HEK293 (cell line): ENCODE measurements at regions of chr6 and their contacts with region 1.

Region 1: DNA sequence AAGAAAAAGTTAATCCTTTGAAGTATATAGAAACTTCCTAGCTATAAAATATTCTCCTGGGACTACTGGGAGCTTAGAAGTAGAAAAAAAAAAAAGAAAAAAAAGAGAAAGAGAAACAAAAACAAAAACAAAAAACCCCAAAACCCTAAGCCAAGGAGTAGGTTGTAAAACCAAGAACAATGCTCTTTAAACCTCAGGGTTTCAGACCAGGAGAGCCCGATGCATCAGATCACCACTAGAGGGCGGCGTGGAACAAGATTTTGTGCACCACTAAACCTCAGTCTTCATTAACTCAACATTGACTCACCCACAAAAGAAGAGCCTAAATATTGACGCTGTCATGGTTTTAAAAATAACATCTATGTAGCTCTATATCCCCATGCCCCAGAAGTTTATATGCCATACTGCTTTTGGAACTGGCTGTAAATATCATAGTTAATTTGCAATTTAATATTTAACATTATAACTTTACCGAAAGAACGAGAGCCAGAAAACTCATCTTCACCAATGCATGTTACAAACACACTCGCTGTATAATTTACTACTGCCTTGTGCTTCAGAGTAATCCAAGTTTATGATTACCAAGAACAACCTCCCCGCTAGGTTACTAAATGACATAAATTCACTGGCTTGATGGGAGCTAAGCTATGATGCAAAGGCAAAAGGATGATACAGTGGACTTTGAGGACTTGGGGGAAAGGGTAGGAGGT is 19.2 kb downstream of the MCUR1 start:
- H3K4me3 ChIP-seq: no peak overlapping the region
- H3K27ac ChIP-seq: no peak overlapping the region
- H3K4me1 ChIP-seq: peaks cover 4% of the 10 kb centered on the region; the same call in 1 of the 2 replicates
- CTCF ChIP-seq: peak; percentile 64; the same call in 1 of the 2 replicates

Region 2: GRCh38 chr6:11947063-11947974 is 1847.9 kb before region 1 on chr6:
- CTCF ChIA-PET with region 1: no interaction called
- POLR2A ChIA-PET with region 1: no interaction called
- H3K4me3 ChIP-seq: no peak overlapping the region
- H3K27ac ChIP-seq: no peak overlapping the region
- H3K4me1 ChIP-seq: no peaks in the 10 kb centered on the region
- CTCF ChIP-seq: no peak

Region 3: GRCh38 chr6:13653296-13653695 is 141.9 kb before region 1 on chr6:
- CTCF ChIA-PET with region 1: no interaction called
- POLR2A ChIA-PET with region 1: no interaction called
- H3K4me3 ChIP-seq: no peak overlapping the region
- H3K27ac ChIP-seq: no peak overlapping the region
- H3K4me1 ChIP-seq: peaks cover 12% of the 10 kb centered on the region; the same call in 1 of the 2 replicates
- CTCF ChIP-seq: no peak

Region 4: DNA sequence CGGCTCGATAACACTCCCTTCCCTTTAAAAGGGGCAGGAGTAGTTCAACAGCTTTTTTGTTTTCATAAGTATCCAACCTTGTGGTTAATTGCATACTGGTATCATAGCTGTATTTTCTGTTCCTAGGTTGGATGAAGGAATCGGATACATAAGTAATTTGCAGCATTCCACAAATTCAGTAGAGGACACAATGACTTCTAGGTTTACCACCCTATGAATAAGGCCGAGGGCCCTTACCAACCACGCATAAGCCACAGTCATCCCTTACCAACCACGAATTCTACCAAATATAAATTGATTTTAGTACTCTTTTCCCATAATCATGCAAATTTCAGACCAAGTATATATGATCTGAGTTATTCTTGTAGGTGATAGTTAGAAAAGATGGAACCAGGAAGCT is 17.2 kb before region 1 on chr6:
- CTCF ChIA-PET with region 1: interaction called, 10 read pairs
- POLR2A ChIA-PET with region 1: no interaction called
- H3K4me3 ChIP-seq: no peak overlapping the region
- H3K27ac ChIP-seq: no peak overlapping the region
- H3K4me1 ChIP-seq: no peaks in the 10 kb centered on the region
- CTCF ChIP-seq: no peak

Region 5: GRCh38 chr6:13814176-13814937 is 19.2 kb after region 1 on chr6 and contains the start of gene MCUR1:
- CTCF ChIA-PET with region 1: interaction called, 56 read pairs
- POLR2A ChIA-PET with region 1: interaction called, 4 read pairs
- H3K4me3 ChIP-seq: peak within 1 kb of the TSS; percentile 66
- H3K27ac ChIP-seq: peak within 1 kb of the TSS; percentile 91
- H3K4me1 ChIP-seq: peaks cover 5% of the 10 kb centered on the region; the same call in 1 of the 2 replicates
- CTCF ChIP-seq: peak; percentile 83

Region 6: GRCh38 chr6:14046476-14047068 is 251.4 kb after region 1 on chr6:
- CTCF ChIA-PET with region 1: interaction called, 14 read pairs
- POLR2A ChIA-PET with region 1: no interaction called
- H3K4me3 ChIP-seq: no peak overlapping the region
- H3K27ac ChIP-seq: no peak overlapping the region
- H3K4me1 ChIP-seq: no peaks in the 10 kb centered on the region
- CTCF ChIP-seq: peak; percentile 26; the same call in 1 of the 2 replicates